CD4-positive, alpha-beta T cell (primary cell): ENCODE measurements at regions of chr4 and their contacts with region 1.

Region 1: DNA sequence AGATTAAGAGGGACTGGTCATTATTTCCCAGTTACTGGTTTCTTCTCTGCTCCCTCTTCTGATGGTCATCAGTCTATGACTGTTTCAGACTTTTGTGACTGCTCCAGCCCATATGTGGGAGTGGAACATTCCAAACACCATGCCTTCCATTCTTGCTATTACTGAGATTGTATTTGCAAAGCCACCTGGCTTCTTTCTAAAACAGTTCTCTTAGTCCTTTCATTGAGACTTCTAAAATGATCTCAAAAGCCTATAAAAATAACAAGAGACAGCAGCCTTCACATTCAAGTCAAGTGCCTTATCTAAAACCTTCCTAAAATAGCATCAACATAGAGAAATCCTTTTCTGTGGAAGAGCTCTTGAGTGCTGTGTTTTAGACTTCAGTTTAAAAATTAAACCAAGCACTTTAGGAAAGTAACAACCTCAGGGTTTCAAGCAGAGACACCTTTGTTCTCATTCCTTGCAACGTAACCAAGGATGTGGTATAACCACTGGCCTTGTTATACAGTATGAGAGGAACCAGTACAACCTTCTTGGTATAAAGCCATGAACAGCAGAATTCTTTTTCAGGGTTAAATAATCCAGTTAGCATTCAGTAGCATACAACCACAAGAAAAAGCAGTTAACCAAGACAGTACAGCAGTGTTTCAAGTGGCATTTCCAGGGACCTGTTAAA is 97.1 kb downstream of the NFKB1 start:
- DNase-seq: peak in 3 of 14 experiments; percentile 61 to 86 (median 69)
- ATAC-seq: peak; percentile 89
- H3K4me3 ChIP-seq: no peak overlapping the region
- H3K4me3 Mint-ChIP-seq: peak overlapping the region; percentile 32
- H3K27ac ChIP-seq: peak overlapping the region in 1 of 2 donors; percentile 63
- H3K27ac Mint-ChIP-seq: peak overlapping the region; percentile 82
- H3K4me1 ChIP-seq: peaks cover 36% of the 10 kb centered on the region
- H3K4me1 Mint-ChIP-seq: peaks cover 74% of the 10 kb centered on the region
- H3K27me3 ChIP-seq: no peaks in the 10 kb centered on the region
- H3K27me3 Mint-ChIP-seq: no peaks in the 10 kb centered on the region
- CTCF ChIP-seq: no peak

Region 2: DNA sequence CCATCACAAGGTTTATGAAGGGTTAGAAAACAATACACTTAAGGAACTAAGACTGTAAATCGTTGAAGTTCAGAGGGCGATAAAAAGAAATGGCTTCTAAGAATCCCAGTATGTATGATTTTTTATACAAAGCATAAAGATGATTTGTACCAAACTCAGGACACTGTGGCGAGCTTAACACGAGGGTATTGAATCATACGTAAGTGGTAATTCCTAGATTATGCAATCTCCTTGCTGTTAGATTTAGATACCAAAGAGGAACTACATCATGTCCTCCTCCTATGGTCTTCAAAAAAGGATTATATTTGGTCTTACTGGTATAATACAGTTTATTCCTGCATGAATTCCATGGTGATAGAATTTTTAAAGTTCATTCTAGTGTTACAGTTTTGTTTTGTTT is 73.1 kb before region 1 on chr4:
- CTCF ChIA-PET with region 1: no interaction called
- POLR2A ChIA-PET with region 1: interaction called, 3 read pairs
- intact Hi-C with region 1: loop called in 1 of 2 experiments (anchors 5 kb)
- DNase-seq: peak in 2 of 14 experiments; percentile 59 to 67
- ATAC-seq: no peak
- H3K4me3 ChIP-seq: no peak overlapping the region
- H3K4me3 Mint-ChIP-seq: peak overlapping the region; percentile 30
- H3K27ac ChIP-seq: no peak overlapping the region
- H3K27ac Mint-ChIP-seq: peak overlapping the region; percentile 58
- H3K4me1 ChIP-seq: peaks cover 23% of the 10 kb centered on the region
- H3K4me1 Mint-ChIP-seq: peaks cover 99% of the 10 kb centered on the region
- H3K27me3 ChIP-seq: no peaks in the 10 kb centered on the region
- H3K27me3 Mint-ChIP-seq: no peaks in the 10 kb centered on the region
- CTCF ChIP-seq: no peak

Region 3: GRCh38 chr4:102535398-102536082 is 62.7 kb before region 1 on chr4:
- CTCF ChIA-PET with region 1: interaction called, 3 read pairs
- POLR2A ChIA-PET with region 1: no interaction called
- intact Hi-C with region 1: loop called in 1 of 2 experiments (anchors 5 kb)
- DNase-seq: peak in 2 of 14 experiments; percentile 41 to 51
- ATAC-seq: peak; percentile 69
- H3K4me3 ChIP-seq: no peak overlapping the region
- H3K4me3 Mint-ChIP-seq: no peak overlapping the region
- H3K27ac ChIP-seq: no peak overlapping the region
- H3K27ac Mint-ChIP-seq: peak overlapping the region; percentile 59
- H3K4me1 ChIP-seq: peaks cover 3% of the 10 kb centered on the region
- H3K4me1 Mint-ChIP-seq: peaks cover 70% of the 10 kb centered on the region
- H3K27me3 ChIP-seq: no peaks in the 10 kb centered on the region
- H3K27me3 Mint-ChIP-seq: no peaks in the 10 kb centered on the region
- CTCF ChIP-seq: no peak

Region 4: GRCh38 chr4:102564399-102565059 is 33.7 kb before region 1 on chr4:
- CTCF ChIA-PET with region 1: interaction called, 3 read pairs
- POLR2A ChIA-PET with region 1: no interaction called
- intact Hi-C with region 1: loop called in 1 of 2 experiments (anchors 5 kb)
- DNase-seq: peak in 2 of 14 experiments; percentile 67 to 76
- ATAC-seq: no peak
- H3K4me3 ChIP-seq: no peak overlapping the region
- H3K4me3 Mint-ChIP-seq: no peak overlapping the region
- H3K27ac ChIP-seq: no peak overlapping the region
- H3K27ac Mint-ChIP-seq: peak overlapping the region; percentile 40
- H3K4me1 ChIP-seq: peaks cover 20% of the 10 kb centered on the region
- H3K4me1 Mint-ChIP-seq: peaks cover 52% of the 10 kb centered on the region
- H3K27me3 ChIP-seq: no peaks in the 10 kb centered on the region
- H3K27me3 Mint-ChIP-seq: no peaks in the 10 kb centered on the region
- CTCF ChIP-seq: no peak

Region 5: DNA sequence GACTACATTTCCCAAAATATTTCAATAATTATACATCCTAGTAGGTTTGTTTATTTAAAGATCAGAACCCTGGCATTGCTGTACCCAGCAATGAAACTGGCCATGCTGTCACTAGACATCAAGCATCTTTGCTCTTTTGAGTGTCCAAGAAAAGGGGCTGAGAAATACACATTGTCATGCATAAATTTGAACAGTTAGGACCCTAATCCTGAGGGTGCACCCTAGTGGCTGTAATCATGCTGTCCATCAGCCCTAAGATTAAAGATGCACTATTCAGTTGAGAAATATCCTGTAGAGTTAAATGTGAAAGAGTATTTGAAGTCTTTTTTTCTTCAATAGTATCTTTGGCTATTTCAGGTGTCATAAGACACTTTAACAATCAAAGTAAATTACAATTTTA is 11.8 kb after region 1 on chr4:
- CTCF ChIA-PET with region 1: no interaction called
- POLR2A ChIA-PET with region 1: interaction called, 6 read pairs
- intact Hi-C with region 1: loop called in 1 of 2 experiments (anchors 1 kb)
- DNase-seq: no peak
- ATAC-seq: no peak
- H3K4me3 ChIP-seq: no peak overlapping the region
- H3K4me3 Mint-ChIP-seq: no peak overlapping the region
- H3K27ac ChIP-seq: no peak overlapping the region
- H3K27ac Mint-ChIP-seq: no peak overlapping the region
- H3K4me1 ChIP-seq: peaks cover 42% of the 10 kb centered on the region
- H3K4me1 Mint-ChIP-seq: peaks cover 74% of the 10 kb centered on the region
- H3K27me3 ChIP-seq: no peaks in the 10 kb centered on the region
- H3K27me3 Mint-ChIP-seq: no peaks in the 10 kb centered on the region
- CTCF ChIP-seq: no peak